ENCODE measurements at regions of chr20 and their contacts with region 1.

Region 1: GRCh38 chr20:19974626-19975435 is 42.3 kb upstream of the NAA20 start:
- DNase-seq: peak; percentile 96
- H3K4me3 ChIP-seq: peak overlapping the region; percentile 93
- CTCF ChIP-seq: no peak

Region 2: GRCh38 chr20:19784511-19785172 is 190.2 kb before region 1 on chr20:
- in situ Hi-C with region 1: loop called (anchors 10 kb)
- DNase-seq: peak; percentile 84
- H3K4me3 ChIP-seq: no peak overlapping the region
- CTCF ChIP-seq: peak; percentile 68